ENCODE measurements at regions of chr19 and their contacts with region 1.

Region 1: DNA sequence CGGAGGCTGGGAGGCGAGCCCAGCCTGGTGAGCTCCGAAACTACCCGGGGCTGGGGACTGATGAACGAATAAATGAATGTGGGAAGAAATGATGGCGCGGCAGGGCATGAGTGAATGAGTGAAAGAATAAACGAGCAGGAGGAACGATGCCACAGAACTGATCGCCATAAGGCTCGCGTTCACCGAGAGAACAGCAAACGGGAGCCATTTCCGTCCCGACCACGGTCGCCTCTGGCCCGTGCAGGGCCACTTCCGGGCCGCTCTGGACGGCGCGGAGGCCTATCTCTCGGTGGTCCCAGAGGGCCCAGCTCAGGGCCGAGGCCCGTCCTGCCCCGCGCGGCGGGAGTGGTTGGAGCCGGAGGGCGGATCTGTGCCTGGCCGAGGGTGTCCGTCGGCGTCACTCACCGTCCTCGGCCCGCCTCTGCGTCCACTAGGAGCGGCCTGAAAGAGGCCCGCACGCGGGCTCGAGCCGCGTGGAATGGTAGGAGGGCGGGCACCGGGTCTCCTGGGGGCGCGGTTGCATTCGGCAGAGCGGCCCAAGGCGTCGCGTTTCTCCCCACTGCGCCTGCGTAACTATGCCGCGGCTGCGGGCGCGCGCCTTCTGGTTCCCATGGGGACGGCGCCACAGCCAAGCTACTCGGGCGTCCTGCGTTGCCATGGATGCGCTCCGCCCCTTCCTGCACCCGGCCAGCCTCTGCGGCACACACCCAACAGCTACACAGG is at the start of gene ZNF497:
- DNase-seq: peak; percentile 97
- H3K4me3 Mint-ChIP-seq: peak within 1 kb of the TSS; percentile 99
- H3K27ac Mint-ChIP-seq: peak within 1 kb of the TSS; percentile 99
- H3K4me1 Mint-ChIP-seq: peaks cover 5% of the 10 kb centered on the region
- H3K27me3 Mint-ChIP-seq: no peaks in the 10 kb centered on the region
- CTCF ChIP-seq: no peak
- total RNA-seq, gene ZNF497: 3.2 and 3.9 TPM in 2 replicates

Region 2: DNA sequence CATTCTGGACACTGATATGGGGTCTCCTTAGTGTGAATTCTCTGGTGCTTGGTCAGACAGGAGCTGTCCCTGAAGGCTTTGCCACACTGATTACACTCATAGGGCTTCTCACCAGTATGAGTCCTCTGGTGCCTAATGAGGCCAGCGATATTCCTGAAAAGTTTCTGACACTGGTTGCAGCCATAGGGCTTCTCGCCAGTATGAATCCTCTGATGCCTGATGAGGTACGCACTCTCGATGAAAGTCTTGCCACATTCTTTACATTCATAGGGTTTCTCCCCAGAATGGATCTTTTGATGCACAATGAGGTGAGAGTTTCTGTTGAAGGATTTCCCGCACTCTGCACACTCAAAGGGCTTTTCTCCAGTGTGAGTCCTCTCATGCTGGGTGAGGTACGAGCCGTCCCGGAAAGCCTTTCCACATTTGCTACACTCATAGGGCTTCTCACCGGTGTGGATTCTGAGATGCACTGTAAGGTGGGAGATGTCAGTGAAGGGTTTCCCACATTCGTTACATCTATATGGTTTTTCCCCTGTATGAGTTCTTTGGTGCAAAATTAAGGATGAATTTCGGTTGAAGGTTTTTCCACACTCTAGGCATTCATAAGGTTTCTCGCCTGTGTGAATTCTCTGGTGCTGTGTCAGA is 234.3 kb before region 1 on chr19:
- CTCF ChIA-PET with region 1: no interaction called
- POLR2A ChIA-PET with region 1: no interaction called
- intact Hi-C with region 1: no loop called
- DNase-seq: no peak
- H3K4me3 Mint-ChIP-seq: no peak overlapping the region
- H3K27ac Mint-ChIP-seq: no peak overlapping the region
- H3K4me1 Mint-ChIP-seq: no peaks in the 10 kb centered on the region
- H3K27me3 Mint-ChIP-seq: no peaks in the 10 kb centered on the region
- CTCF ChIP-seq: no peak

Region 3: DNA sequence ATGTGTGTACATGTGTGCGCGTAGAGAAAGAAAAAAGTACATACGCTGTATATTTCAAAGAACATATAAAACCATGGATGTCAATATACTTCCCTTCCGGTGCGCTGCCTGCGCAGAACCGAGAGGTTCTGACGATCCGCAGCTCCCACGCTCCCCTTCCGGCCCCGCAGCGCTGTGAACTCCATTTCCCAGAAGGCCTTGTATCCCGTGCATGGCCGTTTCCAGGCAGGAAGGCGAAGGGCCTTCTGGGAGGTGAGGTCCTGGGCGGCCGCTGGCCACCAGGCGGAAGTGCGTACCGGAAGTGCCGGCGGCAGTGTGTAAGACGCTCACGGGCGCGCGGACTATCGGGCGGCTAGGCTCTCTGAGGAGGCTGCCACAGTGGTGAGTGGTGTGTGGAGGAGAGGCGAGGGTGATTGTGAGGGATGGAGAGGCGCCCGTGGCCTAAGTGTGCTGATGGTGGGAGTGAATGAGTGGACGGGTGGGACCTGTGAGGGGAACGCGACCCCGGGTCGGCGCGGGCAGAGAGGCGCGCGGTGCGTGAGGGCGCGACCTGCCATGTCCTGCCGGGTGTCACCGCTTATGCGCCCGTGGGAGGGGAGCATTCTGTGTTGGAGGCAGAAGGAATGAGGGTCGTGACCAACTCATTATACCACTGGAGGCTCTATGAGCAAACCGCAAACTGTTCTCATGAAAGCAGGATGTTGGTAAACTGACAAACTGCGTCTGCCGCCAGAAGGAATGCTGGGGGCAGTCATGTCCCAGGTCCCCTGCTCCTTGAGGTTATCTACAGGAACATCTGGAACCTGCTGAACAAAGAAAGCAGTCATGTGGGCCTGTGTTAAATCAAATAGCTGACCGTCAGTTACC is 57.1 kb before region 1 on chr19 and contains the start of gene ERVK3-1:
- CTCF ChIA-PET with region 1: interaction called, 4 read pairs
- POLR2A ChIA-PET with region 1: interaction called, 15 read pairs
- intact Hi-C with region 1: no loop called
- DNase-seq: peak; percentile 97
- H3K4me3 Mint-ChIP-seq: peak within 1 kb of the TSS; percentile 96
- H3K27ac Mint-ChIP-seq: peak within 1 kb of the TSS; percentile 98
- H3K4me1 Mint-ChIP-seq: peaks cover 10% of the 10 kb centered on the region
- H3K27me3 Mint-ChIP-seq: no peaks in the 10 kb centered on the region
- CTCF ChIP-seq: no peak
- total RNA-seq, gene ERVK3-1: 63.1 and 64.6 TPM in 2 replicates

Region 4: DNA sequence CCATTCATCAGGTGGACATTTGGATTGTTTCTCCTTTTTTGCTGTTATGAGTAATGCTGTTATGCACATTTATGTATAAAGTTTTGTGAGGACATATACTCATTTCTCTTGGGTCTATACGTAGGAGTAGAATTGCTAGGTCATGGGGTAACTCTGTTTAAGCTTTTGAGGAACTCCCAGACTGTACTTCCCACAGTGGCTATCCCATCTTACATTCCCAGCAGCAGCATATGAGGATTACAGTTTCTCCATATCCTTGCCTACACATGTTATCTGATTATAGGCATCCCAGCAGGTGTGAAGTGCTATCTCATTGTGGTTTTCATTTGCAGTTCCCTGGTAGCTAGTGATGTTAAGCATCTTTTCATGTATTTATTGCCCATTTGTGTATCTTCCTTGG is 29.7 kb before region 1 on chr19:
- CTCF ChIA-PET with region 1: interaction called, 3 read pairs
- POLR2A ChIA-PET with region 1: interaction called, 55 read pairs
- intact Hi-C with region 1: no loop called
- DNase-seq: no peak
- H3K4me3 Mint-ChIP-seq: no peak overlapping the region
- H3K27ac Mint-ChIP-seq: no peak overlapping the region
- H3K4me1 Mint-ChIP-seq: peaks cover 9% of the 10 kb centered on the region
- H3K27me3 Mint-ChIP-seq: no peaks in the 10 kb centered on the region
- CTCF ChIP-seq: no peak

Region 5: GRCh38 chr19:58372311-58373133 is 10.1 kb after region 1 on chr19:
- CTCF ChIA-PET with region 1: interaction called, 11 read pairs
- POLR2A ChIA-PET with region 1: interaction called, 10 read pairs
- intact Hi-C with region 1: no loop called
- DNase-seq: no peak
- H3K4me3 Mint-ChIP-seq: no peak overlapping the region
- H3K27ac Mint-ChIP-seq: no peak overlapping the region
- H3K4me1 Mint-ChIP-seq: no peaks in the 10 kb centered on the region
- H3K27me3 Mint-ChIP-seq: no peaks in the 10 kb centered on the region
- CTCF ChIP-seq: peak; percentile 9

Region 6: DNA sequence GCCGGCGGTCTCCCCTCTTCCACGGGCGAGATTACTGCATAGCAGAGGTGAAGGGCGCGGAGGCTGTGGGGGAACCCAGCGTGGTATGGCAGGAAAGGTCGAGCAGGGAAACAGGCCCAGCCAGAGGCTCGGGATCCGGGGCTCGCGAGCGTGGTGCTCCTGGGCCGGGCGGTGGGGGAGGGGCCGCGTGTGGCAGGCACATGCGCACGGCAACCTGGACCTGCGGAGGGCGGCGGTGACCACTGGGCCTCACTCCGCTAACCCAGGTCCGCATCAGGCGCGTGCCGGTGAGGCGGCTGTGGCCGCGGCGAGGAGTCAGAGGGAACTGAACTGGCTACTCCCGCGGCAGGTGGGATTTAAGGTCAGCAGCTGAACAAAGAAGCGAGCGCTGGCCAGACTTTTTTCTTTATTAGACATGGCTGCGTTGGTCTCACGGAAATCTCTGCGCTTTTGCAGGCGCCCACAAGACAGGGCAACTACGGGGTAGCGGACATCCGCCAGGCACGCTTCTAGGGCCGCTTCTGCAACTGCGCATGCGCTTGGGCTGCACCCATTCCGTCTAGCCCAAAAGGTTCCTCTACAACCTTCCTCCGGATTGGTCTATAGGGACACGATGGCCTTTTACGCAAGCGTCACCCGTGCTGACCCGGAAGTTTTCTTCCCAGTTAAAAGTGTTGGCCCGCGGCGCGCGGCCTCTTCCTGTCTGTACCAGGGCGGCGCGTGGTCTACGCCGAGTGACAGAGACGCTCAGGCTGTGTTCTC is 24.3 kb after region 1 on chr19 and contains the start of gene RPS5:
- CTCF ChIA-PET with region 1: interaction called, 4 read pairs
- POLR2A ChIA-PET with region 1: interaction called, 27 read pairs
- intact Hi-C with region 1: loop called (anchors 1 kb)
- DNase-seq: peak; percentile 100
- H3K4me3 Mint-ChIP-seq: peak within 1 kb of the TSS; percentile 92
- H3K27ac Mint-ChIP-seq: peak within 1 kb of the TSS; percentile 98
- H3K4me1 Mint-ChIP-seq: peaks cover 18% of the 10 kb centered on the region
- H3K27me3 Mint-ChIP-seq: no peaks in the 10 kb centered on the region
- CTCF ChIP-seq: no peak
- total RNA-seq, gene RPS5: 1,779 and 1,872 TPM in 2 replicates

Measured in MCF 10A (cell line).